Dorsolateral prefrontal cortex (tissue), 120 donors: ENCODE measurements at regions of chrX and their contacts with region 1.

Region 1: DNA sequence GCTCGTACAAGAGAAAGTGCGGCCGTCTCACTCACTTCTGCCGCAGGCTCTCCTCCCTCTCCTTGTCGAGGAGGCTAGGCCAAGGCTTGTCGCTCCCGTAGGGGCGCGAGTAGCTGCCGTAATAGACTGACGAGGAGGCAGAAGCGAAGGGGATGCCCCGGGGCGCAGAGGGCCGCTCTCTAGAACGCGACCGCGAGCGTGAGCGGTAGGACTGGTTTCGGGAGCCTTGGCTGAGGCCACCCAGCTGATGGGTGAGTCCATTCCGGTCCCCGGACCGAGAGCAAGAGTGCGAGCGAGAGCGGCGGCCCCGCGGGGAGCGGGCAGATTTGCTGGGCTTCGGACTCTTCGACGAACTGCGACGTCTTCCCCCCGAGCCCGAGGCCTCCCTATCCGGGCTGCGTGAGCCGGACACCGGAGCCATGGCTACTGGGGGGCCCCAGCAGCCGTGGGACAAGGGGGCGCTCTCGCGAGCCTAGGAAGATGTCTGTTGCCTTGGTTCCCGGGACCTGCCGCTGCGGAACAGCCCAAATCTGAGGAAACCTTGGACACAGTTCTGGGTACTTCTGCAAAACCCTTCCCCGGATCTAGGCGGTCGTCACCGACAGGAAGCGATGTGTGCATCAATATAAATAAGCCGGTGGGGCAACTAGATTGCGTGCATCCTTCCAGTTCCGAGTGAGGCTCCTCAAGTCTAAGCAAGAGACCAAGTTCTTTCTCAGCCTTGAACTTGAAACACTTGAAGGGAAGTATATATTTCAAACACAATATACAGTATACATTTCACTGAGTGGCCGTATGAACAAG is at the start of gene NKAP:
- DNase-seq: peak; percentile 44 to 81 (median 75)
- H3K4me3 ChIP-seq: peak within 1 kb of the TSS; percentile 46 to 85 (median 73)
- H3K27ac ChIP-seq: peak within 1 kb of the TSS; percentile 14 to 90 (median 80)
- H3K27me3 ChIP-seq: peaks cover 0 to 22% (median 0%) of the 10 kb centered on the region in 45 donors
- CTCF ChIP-seq: peak in 44 of 56 donors; percentile 1 to 58 (median 34)
- total RNA-seq, gene NKAP: 9.2 to 18.1 (median 12.3) TPM

Region 2: GRCh38 chrX:118603981-118604380 is 1339.4 kb before region 1 on chrX:
- intact Hi-C with region 1: no loop called
- DNase-seq: peak in 5 of 10 donors; percentile 10 to 46 (median 36)
- H3K4me3 ChIP-seq: peak overlapping the region in 24 of 59 donors; percentile 3 to 42 (median 26)
- H3K27ac ChIP-seq: peak overlapping the region in 4 of 59 donors; percentile 3 to 35 (median 29)
- H3K27me3 ChIP-seq: peaks cover 0 to 44% (median 3%) of the 10 kb centered on the region in 45 donors
- CTCF ChIP-seq: peak; percentile 51 to 91 (median 82)

Region 3: GRCh38 chrX:119871599-119872395 is 71.6 kb before region 1 on chrX and contains the starts of genes NDUFA1 and RNF113A:
- intact Hi-C with region 1: loop called in 1 of 2 experiments (anchors 5 kb)
- DNase-seq: peak; percentile 62 to 85 (median 79)
- H3K4me3 ChIP-seq: peak within 1 kb of the TSS; percentile 38 to 82 (median 69)
- H3K27ac ChIP-seq: peak within 1 kb of the TSS; percentile 6 to 94 (median 87)
- H3K27me3 ChIP-seq: peaks cover 0 to 30% (median 0%) of the 10 kb centered on the region in 45 donors
- CTCF ChIP-seq: peak in 7 of 56 donors; percentile 5 to 30 (median 15)
- total RNA-seq, gene NDUFA1: 55.9 to 137 (median 104) TPM
- total RNA-seq, gene RNF113A: 6.9 to 18.1 (median 12.5) TPM

Region 4: GRCh38 chrX:119887721-119888425 is 55.5 kb before region 1 on chrX:
- intact Hi-C with region 1: no loop called
- DNase-seq: peak in 7 of 10 donors; percentile 14 to 54 (median 37)
- H3K4me3 ChIP-seq: peak overlapping the region in 52 of 59 donors; percentile 6 to 62 (median 40)
- H3K27ac ChIP-seq: no peak overlapping the region
- H3K27me3 ChIP-seq: peaks cover 0 to 68% (median 4%) of the 10 kb centered on the region in 45 donors
- CTCF ChIP-seq: peak in 51 of 56 donors; percentile 12 to 56 (median 35)

Region 5: DNA sequence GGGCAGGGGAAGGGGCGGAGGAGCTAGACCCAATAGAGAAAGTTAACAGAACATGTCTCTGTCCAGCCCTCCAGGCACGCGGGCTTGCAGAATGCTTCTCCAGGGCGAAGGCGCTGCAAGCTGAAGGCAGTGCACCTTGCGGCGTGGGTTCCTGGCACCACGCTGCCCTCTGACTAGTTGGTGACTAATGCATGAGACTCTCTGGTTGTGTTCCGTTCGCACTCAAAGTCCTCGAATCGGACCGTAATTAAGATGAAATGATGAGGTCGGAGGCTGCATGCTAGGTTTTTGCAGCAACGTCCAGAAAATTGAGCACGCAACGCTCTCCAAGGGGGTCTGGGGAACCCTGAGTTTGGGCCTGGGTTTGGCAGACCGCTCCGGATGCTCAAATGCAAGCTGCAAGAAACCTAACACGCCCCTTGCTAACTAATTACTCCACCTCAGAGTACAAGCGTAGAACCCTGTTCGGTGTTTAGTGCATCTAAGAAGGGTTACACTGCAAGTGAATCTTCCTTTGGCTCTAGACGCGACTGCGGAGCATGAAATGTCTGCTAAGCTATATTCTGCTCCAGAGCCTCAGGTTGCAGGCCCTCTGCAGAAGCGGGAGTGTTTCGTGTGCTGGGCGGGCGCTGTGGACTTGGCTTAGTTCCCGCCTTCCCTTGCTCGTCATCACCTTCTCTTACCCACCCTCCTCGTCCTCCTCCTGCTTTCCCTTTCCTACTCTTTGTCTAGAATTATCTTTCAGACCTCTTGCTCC is 57.3 kb after region 1 on chrX:
- intact Hi-C with region 1: no loop called
- DNase-seq: no peak
- H3K4me3 ChIP-seq: peak overlapping the region in 1 of 59 donors; percentile 4
- H3K27ac ChIP-seq: no peak overlapping the region
- H3K27me3 ChIP-seq: peaks cover 0 to 96% (median 69%) of the 10 kb centered on the region in 45 donors
- CTCF ChIP-seq: no peak

Region 6: DNA sequence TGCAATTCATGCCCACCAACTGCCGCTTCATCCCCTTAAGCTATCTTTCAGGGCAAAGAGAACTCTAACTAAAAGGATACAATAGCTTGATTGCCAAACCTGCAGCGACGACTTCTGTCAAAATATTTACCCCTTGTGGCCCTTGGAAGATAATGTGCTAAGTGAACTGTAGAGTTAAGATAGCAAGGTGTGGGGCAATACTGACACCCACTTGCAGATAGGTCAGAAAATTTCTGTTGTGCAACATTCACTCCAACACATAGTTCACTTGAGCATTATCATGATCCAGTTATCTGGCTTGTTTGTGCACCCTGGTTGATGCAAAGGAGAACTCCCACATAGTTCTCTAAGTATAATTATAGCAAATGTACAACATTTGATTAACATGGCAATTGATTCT is 78.5 kb after region 1 on chrX:
- intact Hi-C with region 1: no loop called
- DNase-seq: no peak
- H3K4me3 ChIP-seq: no peak overlapping the region
- H3K27ac ChIP-seq: no peak overlapping the region
- H3K27me3 ChIP-seq: peaks cover 0 to 81% (median 36%) of the 10 kb centered on the region in 45 donors
- CTCF ChIP-seq: no peak

Region 7: DNA sequence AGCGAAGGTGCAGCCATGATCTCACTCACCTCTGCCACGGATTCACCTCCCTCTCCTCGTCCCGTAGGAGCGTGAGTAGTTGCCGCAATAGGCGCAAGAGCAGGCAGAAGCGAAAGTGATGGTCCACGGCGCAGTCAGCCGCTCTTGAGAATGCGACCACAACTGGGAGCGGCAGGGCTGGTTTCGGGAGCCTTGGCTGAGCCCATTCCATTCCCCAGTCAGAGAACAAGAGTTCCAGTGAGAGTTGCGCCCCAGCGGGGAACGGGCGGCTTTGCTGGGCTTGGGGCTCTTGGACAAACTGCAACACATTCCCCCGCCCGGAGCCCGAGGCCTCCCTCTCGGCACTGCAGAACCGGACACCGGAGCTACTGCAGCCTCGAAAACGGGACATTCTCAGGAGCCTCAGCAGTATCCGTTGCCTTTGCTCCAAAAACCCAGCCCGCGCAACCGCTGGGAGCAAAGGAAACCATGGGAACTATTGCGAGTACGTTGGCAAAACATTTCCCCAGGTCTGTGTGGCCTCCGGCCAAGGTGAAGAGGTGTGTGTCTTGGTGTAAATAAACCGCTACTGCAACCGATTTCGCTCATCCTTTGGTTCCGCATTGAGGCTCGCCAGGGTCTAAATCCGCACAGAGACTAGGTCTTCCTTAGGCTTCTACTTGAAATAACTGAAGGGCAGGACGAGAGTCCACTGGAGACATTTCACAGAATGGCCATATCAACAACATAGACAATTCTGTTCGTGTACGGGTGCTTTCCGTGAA is 301.5 kb after region 1 on chrX:
- intact Hi-C with region 1: loop called in 1 of 2 experiments (anchors 10 kb)
- DNase-seq: peak in 9 of 10 donors; percentile 33 to 74 (median 49)
- H3K4me3 ChIP-seq: peak overlapping the region; percentile 31 to 79 (median 66)
- H3K27ac ChIP-seq: peak overlapping the region in 53 of 59 donors; percentile 11 to 87 (median 72)
- H3K27me3 ChIP-seq: peaks cover 0 to 65% (median 8%) of the 10 kb centered on the region in 45 donors
- CTCF ChIP-seq: peak in 12 of 56 donors; percentile 8 to 29 (median 14)